CD8-positive, alpha-beta memory T cell (primary cell): ENCODE measurements at regions of chr10 and their contacts with region 1.

Region 1: GRCh38 chr10:4767033-4767814 is 58.8 kb upstream of the AKR1E2 start:
- DNase-seq: peak in 2 of 5 donors; percentile 1 to 5
- H3K4me3 ChIP-seq: no peak overlapping the region
- H3K4me3 Mint-ChIP-seq: no peak overlapping the region
- H3K27ac ChIP-seq: no peak overlapping the region
- H3K27ac Mint-ChIP-seq: no peak overlapping the region
- H3K4me1 ChIP-seq: no peaks in the 10 kb centered on the region
- H3K4me1 Mint-ChIP-seq: no peaks in the 10 kb centered on the region
- H3K27me3 ChIP-seq: no peaks in the 10 kb centered on the region
- H3K27me3 Mint-ChIP-seq: peaks cover 6 to 49% of the 10 kb centered on the region in 2 donors

Region 2: GRCh38 chr10:3197348-3198003 is 1569.7 kb before region 1 on chr10:
- CTCF ChIA-PET with region 1: interaction called, 10 read pairs
- POLR2A ChIA-PET with region 1: no interaction called
- DNase-seq: peak; percentile 8 to 90 (median 67)
- H3K4me3 ChIP-seq: peak overlapping the region; percentile 51
- H3K4me3 Mint-ChIP-seq: peak overlapping the region; percentile 49 to 92 (median 81)
- H3K27ac ChIP-seq: no peak overlapping the region
- H3K27ac Mint-ChIP-seq: peak overlapping the region in 7 of 8 donors; percentile 14 to 96 (median 74)
- H3K4me1 ChIP-seq: peaks cover 19% of the 10 kb centered on the region
- H3K4me1 Mint-ChIP-seq: peaks cover 15 to 34% (median 26%) of the 10 kb centered on the region in 3 donors
- H3K27me3 ChIP-seq: peaks cover 16% of the 10 kb centered on the region
- H3K27me3 Mint-ChIP-seq: peaks cover 20 to 29% of the 10 kb centered on the region in 2 donors

Region 3: GRCh38 chr10:3239066-3239919 is 1527.9 kb before region 1 on chr10:
- CTCF ChIA-PET with region 1: interaction called, 14 read pairs
- POLR2A ChIA-PET with region 1: no interaction called
- DNase-seq: peak; percentile 47 to 77 (median 54)
- H3K4me3 ChIP-seq: no peak overlapping the region
- H3K4me3 Mint-ChIP-seq: peak overlapping the region in 2 of 7 donors; percentile 17
- H3K27ac ChIP-seq: no peak overlapping the region
- H3K27ac Mint-ChIP-seq: no peak overlapping the region
- H3K4me1 ChIP-seq: no peaks in the 10 kb centered on the region
- H3K4me1 Mint-ChIP-seq: peaks cover 3 to 8% (median 5%) of the 10 kb centered on the region in 3 donors
- H3K27me3 ChIP-seq: no peaks in the 10 kb centered on the region
- H3K27me3 Mint-ChIP-seq: peaks cover 7 to 13% of the 10 kb centered on the region in 2 donors

Region 4: DNA sequence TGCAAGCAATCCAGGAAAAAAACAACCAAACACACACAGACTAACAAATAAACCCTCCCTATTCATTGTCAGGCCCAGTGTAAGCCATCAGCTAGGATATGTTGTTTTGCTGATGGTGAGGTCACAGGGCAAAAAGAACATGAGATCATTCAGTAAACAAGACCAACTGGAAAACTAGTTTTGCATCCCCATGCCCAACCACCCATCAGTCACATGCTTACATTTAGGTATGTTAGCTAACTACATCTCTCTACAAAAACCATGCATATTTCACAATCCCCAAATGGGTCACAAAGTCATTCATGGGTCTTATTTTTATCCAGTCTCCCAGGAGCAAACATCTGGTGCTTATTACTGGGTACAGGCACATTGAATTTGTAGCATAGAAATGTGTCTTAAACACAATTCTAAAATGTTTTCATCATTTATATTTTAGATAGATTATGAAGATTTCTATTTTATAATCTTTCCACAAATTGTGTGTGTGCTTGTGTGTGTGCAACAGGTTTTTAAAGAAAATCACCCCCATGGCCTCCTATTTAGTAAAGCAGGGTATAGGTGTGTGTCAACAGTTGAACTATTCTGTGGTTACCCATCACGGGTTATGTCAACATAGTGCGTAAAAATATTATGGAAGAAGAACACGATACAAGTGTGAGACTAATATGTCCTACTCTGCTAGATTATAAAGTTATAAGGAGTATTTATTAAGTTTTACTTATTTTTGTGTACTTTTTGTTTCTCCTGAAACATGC is 45.0 kb before region 1 on chr10:
- CTCF ChIA-PET with region 1: no interaction called
- POLR2A ChIA-PET with region 1: no interaction called
- DNase-seq: no peak
- H3K4me3 ChIP-seq: no peak overlapping the region
- H3K4me3 Mint-ChIP-seq: no peak overlapping the region
- H3K27ac ChIP-seq: no peak overlapping the region
- H3K27ac Mint-ChIP-seq: no peak overlapping the region
- H3K4me1 ChIP-seq: no peaks in the 10 kb centered on the region
- H3K4me1 Mint-ChIP-seq: no peaks in the 10 kb centered on the region
- H3K27me3 ChIP-seq: no peaks in the 10 kb centered on the region
- H3K27me3 Mint-ChIP-seq: peaks cover 3 to 39% of the 10 kb centered on the region in 2 donors